CD4-positive, alpha-beta memory T cell (primary cell): ENCODE measurements at regions of chr2 and their contacts with region 1.

Region 1: DNA sequence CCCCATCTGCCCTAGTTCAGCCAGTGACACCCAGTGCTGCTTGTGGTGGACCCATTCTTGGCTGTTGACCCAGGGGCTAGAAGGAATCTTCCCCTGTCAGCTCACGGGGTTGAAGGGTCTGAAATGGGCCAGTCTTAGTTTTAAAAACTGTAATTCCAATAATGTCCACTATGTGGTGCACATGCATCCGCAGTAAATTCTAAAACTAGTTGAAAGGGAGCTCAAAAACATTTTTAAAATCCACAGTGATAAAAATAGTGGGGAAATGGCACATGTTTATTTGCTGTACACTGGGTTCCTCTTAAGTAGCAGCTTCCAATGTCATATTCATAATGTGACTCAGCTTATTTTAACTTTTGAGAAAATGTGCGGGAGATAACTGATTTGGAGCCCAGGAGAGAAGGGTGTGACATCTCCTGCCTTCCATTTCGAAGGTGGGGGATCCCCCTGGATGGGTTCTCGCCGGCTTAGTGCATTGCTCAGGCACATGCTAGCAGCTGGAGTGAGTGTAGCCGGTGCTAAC is 32.8 kb downstream of the GRHL1 start:
- DNase-seq: peak in 4 of 5 donors; percentile 54 to 60 (median 59)
- H3K4me3 ChIP-seq: no peak overlapping the region
- H3K4me3 Mint-ChIP-seq: peak overlapping the region in 1 of 8 donors; percentile 1
- H3K27ac ChIP-seq: no peak overlapping the region
- H3K27ac Mint-ChIP-seq: peak overlapping the region in 1 of 7 donors; percentile 73
- H3K4me1 ChIP-seq: peaks cover 14% of the 10 kb centered on the region
- H3K4me1 Mint-ChIP-seq: peaks cover 10 to 14% (median 11%) of the 10 kb centered on the region in 4 donors
- H3K27me3 ChIP-seq: no peaks in the 10 kb centered on the region
- H3K27me3 Mint-ChIP-seq: peaks cover 0 to 2% of the 10 kb centered on the region in 2 donors

Region 2: GRCh38 chr2:9965119-9965822 is 19.0 kb before region 1 on chr2:
- CTCF ChIA-PET with region 1: interaction called, 47 read pairs
- POLR2A ChIA-PET with region 1: interaction called, 6 read pairs
- intact Hi-C with region 1: no loop called
- DNase-seq: peak in 3 of 5 donors; percentile 24 to 26 (median 25)
- H3K4me3 ChIP-seq: no peak overlapping the region
- H3K4me3 Mint-ChIP-seq: peak overlapping the region; percentile 63 to 82 (median 73)
- H3K27ac ChIP-seq: no peak overlapping the region
- H3K27ac Mint-ChIP-seq: peak overlapping the region in 6 of 7 donors; percentile 65 to 92 (median 85)
- H3K4me1 ChIP-seq: peaks cover 21% of the 10 kb centered on the region
- H3K4me1 Mint-ChIP-seq: peaks cover 13 to 18% (median 15%) of the 10 kb centered on the region in 4 donors
- H3K27me3 ChIP-seq: no peaks in the 10 kb centered on the region
- H3K27me3 Mint-ChIP-seq: no peaks in the 10 kb centered on the region

Region 3: DNA sequence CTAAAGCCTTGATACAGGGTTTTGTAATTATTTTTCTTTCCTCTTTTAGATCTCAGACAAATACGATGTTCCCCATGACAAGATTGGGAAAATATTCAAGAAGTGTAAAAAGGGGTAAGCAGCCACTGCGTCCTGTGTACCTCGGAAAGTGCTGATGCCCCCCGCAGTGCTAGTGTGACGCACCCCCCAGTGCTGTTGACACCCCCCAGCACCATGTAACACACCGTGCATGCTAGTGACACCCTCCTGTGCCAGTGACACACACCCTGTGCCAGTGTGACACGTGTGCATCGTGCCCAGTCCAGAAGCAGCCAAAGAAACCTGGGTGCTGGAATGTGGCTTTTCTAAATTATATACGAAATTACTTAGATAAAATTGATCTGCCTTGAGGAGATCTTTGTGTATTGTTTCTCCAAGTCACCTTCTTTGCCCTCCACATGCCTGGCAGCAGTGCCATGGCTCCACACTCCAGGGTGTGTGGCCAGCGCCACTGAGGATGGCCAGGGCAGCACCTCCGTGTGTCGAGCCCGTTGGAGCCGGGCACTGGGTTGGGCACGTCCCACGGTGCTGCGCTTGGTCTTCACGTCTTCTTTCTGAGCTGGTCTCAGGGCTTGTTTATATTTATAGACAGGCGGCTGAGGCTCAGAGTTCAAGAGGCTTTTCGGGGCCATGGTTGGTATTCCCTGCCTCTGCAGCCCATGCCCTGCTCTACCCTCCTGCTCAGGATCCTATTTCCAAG is 14.8 kb after region 1 on chr2:
- CTCF ChIA-PET with region 1: interaction called, 42 read pairs
- POLR2A ChIA-PET with region 1: no interaction called
- intact Hi-C with region 1: no loop called
- DNase-seq: no peak
- H3K4me3 ChIP-seq: no peak overlapping the region
- H3K4me3 Mint-ChIP-seq: no peak overlapping the region
- H3K27ac ChIP-seq: no peak overlapping the region
- H3K27ac Mint-ChIP-seq: peak overlapping the region in 1 of 7 donors; percentile 35
- H3K4me1 ChIP-seq: no peaks in the 10 kb centered on the region
- H3K4me1 Mint-ChIP-seq: peaks cover 0 to 6% (median 3%) of the 10 kb centered on the region in 4 donors
- H3K27me3 ChIP-seq: no peaks in the 10 kb centered on the region
- H3K27me3 Mint-ChIP-seq: peaks cover 0 to 2% of the 10 kb centered on the region in 2 donors

Region 4: GRCh38 chr2:10028988-10029874 is 45.0 kb after region 1 on chr2:
- CTCF ChIA-PET with region 1: interaction called, 35 read pairs
- POLR2A ChIA-PET with region 1: interaction called, 6 read pairs
- intact Hi-C with region 1: no loop called
- DNase-seq: peak; percentile 21 to 60 (median 57)
- H3K4me3 ChIP-seq: peak overlapping the region; percentile 42 to 51
- H3K4me3 Mint-ChIP-seq: peak overlapping the region; percentile 48 to 80 (median 69)
- H3K27ac ChIP-seq: peak overlapping the region; percentile 9
- H3K27ac Mint-ChIP-seq: peak overlapping the region; percentile 39 to 90 (median 73)
- H3K4me1 ChIP-seq: peaks cover 30% of the 10 kb centered on the region
- H3K4me1 Mint-ChIP-seq: peaks cover 4 to 34% (median 23%) of the 10 kb centered on the region in 4 donors
- H3K27me3 ChIP-seq: no peaks in the 10 kb centered on the region
- H3K27me3 Mint-ChIP-seq: no peaks in the 10 kb centered on the region

Region 5: GRCh38 chr2:10057231-10058107 is 73.2 kb after region 1 on chr2:
- CTCF ChIA-PET with region 1: interaction called, 431 read pairs
- POLR2A ChIA-PET with region 1: no interaction called
- intact Hi-C with region 1: no loop called
- DNase-seq: no peak
- H3K4me3 ChIP-seq: no peak overlapping the region
- H3K4me3 Mint-ChIP-seq: peak overlapping the region in 2 of 8 donors; percentile 39 to 43
- H3K27ac ChIP-seq: no peak overlapping the region
- H3K27ac Mint-ChIP-seq: no peak overlapping the region
- H3K4me1 ChIP-seq: peaks cover 6% of the 10 kb centered on the region
- H3K4me1 Mint-ChIP-seq: peaks cover 0 to 4% (median 0%) of the 10 kb centered on the region in 4 donors
- H3K27me3 ChIP-seq: no peaks in the 10 kb centered on the region
- H3K27me3 Mint-ChIP-seq: peaks cover 0 to 2% of the 10 kb centered on the region in 2 donors

Region 6: GRCh38 chr2:10097352-10098148 is 113.3 kb after region 1 on chr2:
- CTCF ChIA-PET with region 1: interaction called, 15 read pairs
- POLR2A ChIA-PET with region 1: no interaction called
- intact Hi-C with region 1: no loop called
- DNase-seq: peak in 2 of 5 donors; percentile 30 to 31
- H3K4me3 ChIP-seq: no peak overlapping the region
- H3K4me3 Mint-ChIP-seq: no peak overlapping the region
- H3K27ac ChIP-seq: no peak overlapping the region
- H3K27ac Mint-ChIP-seq: no peak overlapping the region
- H3K4me1 ChIP-seq: no peaks in the 10 kb centered on the region
- H3K4me1 Mint-ChIP-seq: peaks cover 0 to 8% (median 1%) of the 10 kb centered on the region in 4 donors
- H3K27me3 ChIP-seq: peaks cover 7% of the 10 kb centered on the region
- H3K27me3 Mint-ChIP-seq: peaks cover 17 to 34% of the 10 kb centered on the region in 2 donors

Region 7: GRCh38 chr2:10109311-10109710 is 125.0 kb after region 1 on chr2:
- CTCF ChIA-PET with region 1: no interaction called
- POLR2A ChIA-PET with region 1: no interaction called
- intact Hi-C with region 1: no loop called
- DNase-seq: no peak
- H3K4me3 ChIP-seq: no peak overlapping the region
- H3K4me3 Mint-ChIP-seq: no peak overlapping the region
- H3K27ac ChIP-seq: no peak overlapping the region
- H3K27ac Mint-ChIP-seq: no peak overlapping the region
- H3K4me1 ChIP-seq: no peaks in the 10 kb centered on the region
- H3K4me1 Mint-ChIP-seq: no peaks in the 10 kb centered on the region
- H3K27me3 ChIP-seq: no peaks in the 10 kb centered on the region
- H3K27me3 Mint-ChIP-seq: peaks cover 0 to 3% of the 10 kb centered on the region in 2 donors